ENCODE measurements at regions of chr6 and their contacts with region 1.

Region 1: GRCh38 chr6:5302995-5303622 is 41.8 kb downstream of the FARS2 start:
- DNase-seq: peak; percentile 66
- ATAC-seq: peak; percentile 83
- H3K4me3 Mint-ChIP-seq: no peak overlapping the region
- H3K27ac Mint-ChIP-seq: peak overlapping the region; percentile 20
- H3K4me1 Mint-ChIP-seq: peaks cover 26% of the 10 kb centered on the region
- H3K27me3 Mint-ChIP-seq: no peaks in the 10 kb centered on the region

Region 2: GRCh38 chr6:4864519-4864918 is 438.6 kb before region 1 on chr6:
- CTCF ChIA-PET with region 1: no interaction called
- POLR2A ChIA-PET with region 1: no interaction called
- DNase-seq: no peak
- ATAC-seq: no peak
- H3K4me3 Mint-ChIP-seq: no peak overlapping the region
- H3K27ac Mint-ChIP-seq: no peak overlapping the region
- H3K4me1 Mint-ChIP-seq: peaks cover 3% of the 10 kb centered on the region
- H3K27me3 Mint-ChIP-seq: no peaks in the 10 kb centered on the region

Region 3: DNA sequence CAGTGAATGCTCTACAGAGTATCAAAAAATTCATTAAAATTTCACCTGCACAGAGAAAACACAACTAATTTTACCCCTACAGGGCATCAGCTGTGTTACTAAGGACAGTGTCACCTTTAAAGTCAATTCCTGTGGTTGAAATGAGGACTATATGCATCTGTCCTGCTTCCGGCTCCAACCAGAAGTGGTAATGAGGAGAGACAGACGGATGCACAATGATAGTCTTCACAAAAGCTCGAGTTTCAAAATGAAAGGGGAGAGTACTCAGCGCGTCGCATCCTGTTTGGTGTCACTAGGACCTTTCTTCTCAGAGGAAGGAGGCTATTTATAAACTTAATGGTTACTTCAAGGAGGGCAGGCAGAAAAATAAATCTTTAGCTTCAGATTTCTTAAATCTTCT is 128.9 kb before region 1 on chr6:
- CTCF ChIA-PET with region 1: interaction called, 18 read pairs
- POLR2A ChIA-PET with region 1: interaction called, 4 read pairs
- DNase-seq: peak; percentile 88
- ATAC-seq: peak; percentile 95
- H3K4me3 Mint-ChIP-seq: peak overlapping the region; percentile 72
- H3K27ac Mint-ChIP-seq: peak overlapping the region; percentile 98
- H3K4me1 Mint-ChIP-seq: peaks cover 59% of the 10 kb centered on the region
- H3K27me3 Mint-ChIP-seq: no peaks in the 10 kb centered on the region

Region 4: GRCh38 chr6:5260661-5261544 is 42.2 kb before region 1 on chr6 and contains the starts of genes FARS2 and LYRM4:
- CTCF ChIA-PET with region 1: interaction called, 22 read pairs
- POLR2A ChIA-PET with region 1: interaction called, 8 read pairs
- DNase-seq: peak; percentile 90
- ATAC-seq: peak; percentile 88
- H3K4me3 Mint-ChIP-seq: peak within 1 kb of the TSS; percentile 99
- H3K27ac Mint-ChIP-seq: peak within 1 kb of the TSS; percentile 100
- H3K4me1 Mint-ChIP-seq: peaks cover 40% of the 10 kb centered on the region
- H3K27me3 Mint-ChIP-seq: no peaks in the 10 kb centered on the region
- total RNA-seq, gene FARS2: 16.7 to 20.2 TPM
- total RNA-seq, gene LYRM4: 28.9 to 29.8 TPM

Region 5: DNA sequence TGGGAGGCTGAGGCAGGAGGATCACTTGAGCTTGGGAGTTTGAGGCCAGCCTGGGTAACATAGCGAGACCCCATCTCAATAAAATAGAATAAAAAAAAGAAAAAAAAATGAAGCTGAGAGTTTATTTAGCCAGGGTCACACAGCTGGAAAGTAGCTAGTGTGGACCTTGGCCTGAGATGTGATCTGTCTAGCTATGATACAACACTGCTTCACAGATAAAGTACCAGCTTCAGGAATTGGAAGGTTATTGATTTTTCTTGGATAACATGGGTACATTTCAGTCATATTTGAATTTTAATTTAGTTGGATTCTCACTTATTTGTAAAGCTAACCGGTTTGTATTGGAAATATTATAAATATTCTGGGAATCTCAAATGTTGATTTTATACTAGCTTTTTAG is 36.7 kb before region 1 on chr6:
- CTCF ChIA-PET with region 1: interaction called, 22 read pairs
- POLR2A ChIA-PET with region 1: interaction called, 8 read pairs
- DNase-seq: no peak
- ATAC-seq: no peak
- H3K4me3 Mint-ChIP-seq: no peak overlapping the region
- H3K27ac Mint-ChIP-seq: no peak overlapping the region
- H3K4me1 Mint-ChIP-seq: peaks cover 20% of the 10 kb centered on the region
- H3K27me3 Mint-ChIP-seq: no peaks in the 10 kb centered on the region

Region 6: GRCh38 chr6:5278047-5278446 is 25.1 kb before region 1 on chr6:
- CTCF ChIA-PET with region 1: interaction called, 12 read pairs
- POLR2A ChIA-PET with region 1: interaction called, 7 read pairs
- DNase-seq: no peak
- ATAC-seq: no peak
- H3K4me3 Mint-ChIP-seq: no peak overlapping the region
- H3K27ac Mint-ChIP-seq: no peak overlapping the region
- H3K4me1 Mint-ChIP-seq: peaks cover 34% of the 10 kb centered on the region
- H3K27me3 Mint-ChIP-seq: no peaks in the 10 kb centered on the region

Region 7: DNA sequence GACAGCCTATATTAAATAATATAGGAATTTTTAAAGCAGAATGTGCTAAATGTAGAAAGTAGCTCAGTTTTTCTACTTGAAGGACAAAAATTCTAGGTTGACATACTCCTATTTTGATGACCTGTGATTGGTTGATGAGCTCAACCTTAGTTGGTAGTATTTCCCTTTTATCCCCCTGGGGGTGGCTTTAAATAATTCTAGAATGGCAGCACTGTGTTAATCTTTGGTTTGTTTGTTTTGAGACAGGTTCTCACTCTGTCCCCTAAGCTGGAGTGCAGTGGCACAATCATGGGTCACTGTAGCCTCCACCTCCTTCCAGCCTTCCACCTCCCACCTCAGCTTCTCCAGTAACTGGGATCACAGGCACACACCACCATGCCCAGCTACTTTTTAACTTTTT is 12.6 kb before region 1 on chr6:
- CTCF ChIA-PET with region 1: interaction called, 13 read pairs
- POLR2A ChIA-PET with region 1: no interaction called
- DNase-seq: no peak
- ATAC-seq: no peak
- H3K4me3 Mint-ChIP-seq: no peak overlapping the region
- H3K27ac Mint-ChIP-seq: no peak overlapping the region
- H3K4me1 Mint-ChIP-seq: peaks cover 28% of the 10 kb centered on the region
- H3K27me3 Mint-ChIP-seq: no peaks in the 10 kb centered on the region